ENCODE measurements at regions of chr2 and their contacts with region 1.

Region 1: GRCh38 chr2:48107326-48107925 is 201.1 kb upstream of the FBXO11 start:
- DNase-seq: peak; percentile 22
- H3K4me3 Mint-ChIP-seq: no peak overlapping the region
- H3K27ac Mint-ChIP-seq: no peak overlapping the region
- H3K4me1 Mint-ChIP-seq: peaks cover 42% of the 10 kb centered on the region
- H3K27me3 Mint-ChIP-seq: no peaks in the 10 kb centered on the region
- CTCF ChIP-seq: no peak

Region 2: DNA sequence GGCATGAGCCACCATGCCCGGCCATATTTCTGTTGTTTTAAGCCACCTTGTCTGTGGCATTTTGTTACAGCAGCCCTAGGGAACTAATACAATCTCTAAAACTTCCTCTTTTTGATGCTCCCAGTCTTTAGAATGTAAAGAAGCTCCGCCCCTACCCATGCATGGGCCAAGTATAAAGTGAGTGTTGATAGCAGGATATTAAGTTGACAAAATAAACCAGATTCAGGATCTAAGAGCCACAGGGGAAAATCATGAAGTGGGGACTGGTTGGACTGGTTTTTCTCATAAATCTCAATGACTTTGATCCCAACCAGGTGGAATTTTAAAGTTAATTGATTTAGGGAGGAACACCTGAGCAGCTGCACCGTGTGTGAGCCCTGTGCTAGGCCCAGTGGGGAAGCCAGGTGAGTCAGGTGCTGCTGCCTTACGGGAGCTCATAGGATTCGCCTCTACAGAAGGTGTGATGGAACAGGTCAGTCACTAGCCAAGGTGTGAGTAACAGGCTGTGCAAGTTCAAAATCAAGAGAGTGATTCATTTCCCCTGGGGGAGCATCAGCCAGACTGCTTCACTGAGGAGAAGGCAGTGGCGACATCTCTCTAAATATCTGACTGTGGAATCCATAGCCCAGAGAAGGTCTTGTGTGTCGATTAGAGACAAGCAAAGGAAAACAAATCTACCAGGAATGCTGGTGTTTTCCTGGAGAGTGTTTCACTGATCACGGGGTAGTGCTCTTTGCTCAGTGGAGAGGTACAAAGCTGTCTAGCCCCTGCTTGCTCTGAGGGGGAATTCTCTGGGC is 767.5 kb before region 1 on chr2:
- CTCF ChIA-PET with region 1: no interaction called
- intact Hi-C with region 1: loop called (anchors 10 kb)
- DNase-seq: peak; percentile 84
- H3K4me3 Mint-ChIP-seq: peak overlapping the region; percentile 55
- H3K27ac Mint-ChIP-seq: peak overlapping the region; percentile 94
- H3K4me1 Mint-ChIP-seq: peaks cover 49% of the 10 kb centered on the region
- H3K27me3 Mint-ChIP-seq: no peaks in the 10 kb centered on the region
- CTCF ChIP-seq: no peak

Region 3: DNA sequence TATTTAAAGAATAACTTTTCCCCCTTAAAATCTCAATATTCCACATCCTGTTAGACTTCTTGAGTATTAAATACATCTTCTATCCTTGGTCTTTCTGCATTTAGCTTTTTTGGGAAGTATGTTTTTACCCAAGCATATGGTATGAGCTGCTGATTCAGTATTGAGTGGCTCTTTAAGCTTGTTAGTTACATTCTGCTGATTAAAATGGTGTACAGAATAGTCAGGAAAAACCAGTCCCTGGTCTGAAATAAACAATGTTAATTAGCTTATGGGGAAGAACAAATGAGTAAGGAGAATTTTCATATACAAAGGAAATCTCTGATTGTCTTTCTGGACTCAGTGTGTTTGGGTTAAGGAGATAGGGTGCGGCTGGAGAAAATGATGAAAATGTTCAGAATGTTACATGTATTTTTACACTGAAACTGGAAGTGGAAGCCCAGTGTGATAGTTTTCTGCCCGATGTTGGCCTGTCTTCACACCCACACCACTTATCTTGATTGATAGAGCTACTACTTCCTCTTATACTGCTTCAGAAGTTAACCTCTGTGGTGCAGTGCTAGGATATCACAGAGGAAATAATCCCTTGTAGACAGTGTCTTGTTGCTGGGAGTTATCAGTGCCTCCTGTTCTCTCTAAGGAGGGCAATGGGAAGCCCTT is 620.5 kb before region 1 on chr2:
- CTCF ChIA-PET with region 1: no interaction called
- intact Hi-C with region 1: loop called (anchors 10 kb)
- DNase-seq: no peak
- H3K4me3 Mint-ChIP-seq: no peak overlapping the region
- H3K27ac Mint-ChIP-seq: no peak overlapping the region
- H3K4me1 Mint-ChIP-seq: peaks cover 15% of the 10 kb centered on the region
- H3K27me3 Mint-ChIP-seq: no peaks in the 10 kb centered on the region
- CTCF ChIP-seq: no peak

Region 4: GRCh38 chr2:47782671-47783485 is 324.5 kb before region 1 on chr2 and contains the start of gene MSH6:
- CTCF ChIA-PET with region 1: no interaction called
- intact Hi-C with region 1: loop called (anchors 5 kb)
- DNase-seq: peak; percentile 91
- H3K4me3 Mint-ChIP-seq: peak within 1 kb of the TSS; percentile 96
- H3K27ac Mint-ChIP-seq: peak within 1 kb of the TSS; percentile 87
- H3K4me1 Mint-ChIP-seq: peaks cover 16% of the 10 kb centered on the region
- H3K27me3 Mint-ChIP-seq: no peaks in the 10 kb centered on the region
- CTCF ChIP-seq: no peak
- total RNA-seq, gene MSH6: 67.9 and 88.1 TPM in 2 replicates

Region 5: GRCh38 chr2:47906157-47907038 is 201.0 kb before region 1 on chr2 and contains the start of gene FBXO11:
- CTCF ChIA-PET with region 1: interaction called, 3 read pairs
- intact Hi-C with region 1: loop called (anchors 2 kb)
- DNase-seq: peak; percentile 95
- H3K4me3 Mint-ChIP-seq: peak within 1 kb of the TSS; percentile 96
- H3K27ac Mint-ChIP-seq: peak within 1 kb of the TSS; percentile 99
- H3K4me1 Mint-ChIP-seq: peaks cover 8% of the 10 kb centered on the region
- H3K27me3 Mint-ChIP-seq: no peaks in the 10 kb centered on the region
- CTCF ChIP-seq: no peak
- total RNA-seq, gene FBXO11: 58.0 and 65.3 TPM in 2 replicates

Region 6: GRCh38 chr2:48131539-48132270 is 24.3 kb after region 1 on chr2:
- CTCF ChIA-PET with region 1: interaction called, 13 read pairs
- intact Hi-C with region 1: no loop called
- DNase-seq: no peak
- H3K4me3 Mint-ChIP-seq: no peak overlapping the region
- H3K27ac Mint-ChIP-seq: no peak overlapping the region
- H3K4me1 Mint-ChIP-seq: no peaks in the 10 kb centered on the region
- H3K27me3 Mint-ChIP-seq: no peaks in the 10 kb centered on the region
- CTCF ChIP-seq: no peak

Region 7: DNA sequence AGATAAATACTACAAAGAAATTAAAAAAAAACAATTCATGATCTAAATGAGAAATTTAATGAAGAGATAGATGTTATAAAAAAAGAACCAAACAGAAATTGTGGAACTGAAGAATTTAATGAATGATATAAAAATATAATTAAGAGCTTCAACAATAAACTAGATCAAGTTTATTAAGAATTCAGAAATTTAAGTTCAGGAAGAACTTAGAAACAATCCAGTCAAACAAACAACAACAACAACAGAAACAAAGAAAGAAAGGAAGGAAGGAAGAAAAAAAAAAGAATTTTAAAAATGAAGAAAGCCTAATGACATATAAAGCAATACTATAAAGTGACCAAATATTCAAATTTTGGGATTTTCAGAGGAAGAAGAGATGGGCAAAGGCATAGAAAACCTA is 49.7 kb after region 1 on chr2:
- CTCF ChIA-PET with region 1: no interaction called
- intact Hi-C with region 1: no loop called
- DNase-seq: no peak
- H3K4me3 Mint-ChIP-seq: no peak overlapping the region
- H3K27ac Mint-ChIP-seq: no peak overlapping the region
- H3K4me1 Mint-ChIP-seq: no peaks in the 10 kb centered on the region
- H3K27me3 Mint-ChIP-seq: no peaks in the 10 kb centered on the region
- CTCF ChIP-seq: no peak

Region 8: GRCh38 chr2:48471048-48471474 is 363.6 kb after region 1 on chr2:
- CTCF ChIA-PET with region 1: no interaction called
- intact Hi-C with region 1: loop called (anchors 1 kb)
- DNase-seq: peak; percentile 39
- H3K4me3 Mint-ChIP-seq: no peak overlapping the region
- H3K27ac Mint-ChIP-seq: no peak overlapping the region
- H3K4me1 Mint-ChIP-seq: peaks cover 9% of the 10 kb centered on the region
- H3K27me3 Mint-ChIP-seq: no peaks in the 10 kb centered on the region
- CTCF ChIP-seq: peak; percentile 38

Measured in Calu3 (cell line).